ENCODE measurements at regions of chr1 and their contacts with region 1.

Region 1: DNA sequence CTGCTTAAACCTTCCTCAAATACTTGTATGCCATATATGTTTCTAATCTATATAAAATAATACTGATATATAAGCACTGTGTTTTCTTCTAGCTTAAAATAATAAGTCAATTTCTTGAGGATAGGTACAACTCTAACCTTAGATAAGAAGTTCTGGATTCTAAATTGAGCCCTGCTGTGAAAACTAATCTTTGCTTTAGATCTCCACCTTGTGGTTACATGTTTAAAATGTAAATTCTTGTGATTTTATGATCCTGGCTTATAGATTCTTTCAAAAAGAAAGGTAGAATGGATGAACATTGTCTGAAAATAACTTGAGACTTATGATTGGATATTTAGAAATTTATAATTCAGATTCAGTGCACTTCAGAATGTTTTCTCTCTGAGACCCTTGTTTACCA is 38.9 kb upstream of the HMCN1 start:
- DNase-seq: no peak
- ATAC-seq: no peak
- H3K4me3 ChIP-seq: no peak overlapping the region
- H3K4me1 ChIP-seq: peaks cover 7% of the 10 kb centered on the region
- CTCF ChIP-seq: peak; percentile 16

Region 2: DNA sequence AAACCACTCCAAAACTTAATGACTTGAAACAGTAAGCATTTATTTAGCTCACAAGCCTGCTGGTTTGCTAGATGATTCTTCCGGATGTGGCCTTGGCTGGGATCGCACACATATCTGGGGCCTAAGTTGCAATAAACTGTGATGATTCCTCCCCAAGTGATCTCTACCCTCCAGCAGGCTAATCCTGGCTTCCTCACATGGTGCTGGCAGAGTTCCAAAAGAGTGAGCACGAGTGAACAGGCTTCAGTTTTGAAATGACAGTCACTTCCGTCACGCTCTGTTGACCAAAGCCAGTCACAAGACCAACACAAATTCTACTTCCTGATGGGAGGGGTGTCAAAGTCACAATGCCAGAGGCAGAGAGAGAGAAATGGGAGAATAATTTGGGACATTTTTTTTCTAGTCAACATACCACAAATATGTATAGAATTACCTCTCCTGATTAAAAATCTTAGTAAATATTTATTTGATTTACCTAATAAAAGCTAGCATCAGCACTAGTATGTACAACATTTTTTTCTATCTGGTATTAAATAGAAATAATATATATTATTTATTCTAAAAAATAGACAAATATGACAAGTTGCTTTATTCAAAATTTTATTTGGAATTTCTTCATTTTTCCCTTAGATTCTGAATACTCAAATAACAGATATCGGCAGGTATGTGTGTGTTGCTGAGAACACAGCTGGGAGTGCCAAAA is 387.1 kb after region 1 on chr1:
- intact Hi-C with region 1: loop called in 1 of 2 experiments (anchors 5 kb)
- DNase-seq: peak; percentile 63 to 94 (median 72)
- ATAC-seq: peak; percentile 97
- H3K4me3 ChIP-seq: no peak overlapping the region
- H3K4me1 ChIP-seq: peaks cover 8% of the 10 kb centered on the region
- CTCF ChIP-seq: no peak

Measured in mucosa of descending colon (tissue), 3 donors.